ENCODE measurements at regions of chr9 and their contacts with region 1.

Region 1: GRCh38 chr9:89310475-89311346 is at the start of gene CKS2:
- DNase-seq: peak; percentile 100
- H3K4me3 ChIP-seq: peak within 1 kb of the TSS; percentile 70 to 98 (median 97)
- H3K27ac ChIP-seq: peak within 1 kb of the TSS; percentile 98
- H3K4me1 ChIP-seq: peaks cover 28% of the 10 kb centered on the region
- H3K27me3 ChIP-seq: no peaks in the 10 kb centered on the region
- CTCF ChIP-seq: no peak
- POLR2A ChIP-seq: peak; percentile 95
- total RNA-seq, gene CKS2: 149 and 153 TPM in 2 replicates

Region 2: DNA sequence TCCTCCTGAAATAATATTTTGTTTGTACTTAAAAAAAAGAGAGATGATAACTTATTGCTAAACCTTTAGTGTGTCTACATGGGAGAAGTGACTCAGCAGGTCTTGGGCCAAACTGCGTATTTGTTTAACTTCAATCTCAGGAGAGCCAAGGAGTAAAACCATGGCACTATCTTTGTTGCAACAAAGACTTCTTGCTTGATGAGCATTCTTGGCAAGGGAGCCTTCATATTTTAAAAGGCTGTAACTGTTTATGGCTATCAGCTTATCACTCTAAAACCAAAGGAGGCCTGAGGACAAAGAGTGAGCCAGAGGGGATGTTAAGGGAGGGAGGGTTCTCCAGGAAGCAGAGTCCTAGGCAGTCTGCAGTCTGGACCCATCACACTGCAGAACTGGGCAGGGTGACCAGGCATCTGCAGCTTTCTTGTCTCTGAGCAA is 535.7 kb before region 1 on chr9:
- CTCF ChIA-PET with region 1: no interaction called
- POLR2A ChIA-PET with region 1: no interaction called
- dilution Hi-C with region 1: no loop called
- intact Hi-C with region 1: loop called (anchors 1 kb)
- DNase-seq: peak; percentile 80
- H3K4me3 ChIP-seq: no peak overlapping the region
- H3K27ac ChIP-seq: peak overlapping the region; percentile 88
- H3K4me1 ChIP-seq: peaks cover 52% of the 10 kb centered on the region
- H3K27me3 ChIP-seq: no peaks in the 10 kb centered on the region
- CTCF ChIP-seq: no peak
- POLR2A ChIP-seq: no peak

Region 3: DNA sequence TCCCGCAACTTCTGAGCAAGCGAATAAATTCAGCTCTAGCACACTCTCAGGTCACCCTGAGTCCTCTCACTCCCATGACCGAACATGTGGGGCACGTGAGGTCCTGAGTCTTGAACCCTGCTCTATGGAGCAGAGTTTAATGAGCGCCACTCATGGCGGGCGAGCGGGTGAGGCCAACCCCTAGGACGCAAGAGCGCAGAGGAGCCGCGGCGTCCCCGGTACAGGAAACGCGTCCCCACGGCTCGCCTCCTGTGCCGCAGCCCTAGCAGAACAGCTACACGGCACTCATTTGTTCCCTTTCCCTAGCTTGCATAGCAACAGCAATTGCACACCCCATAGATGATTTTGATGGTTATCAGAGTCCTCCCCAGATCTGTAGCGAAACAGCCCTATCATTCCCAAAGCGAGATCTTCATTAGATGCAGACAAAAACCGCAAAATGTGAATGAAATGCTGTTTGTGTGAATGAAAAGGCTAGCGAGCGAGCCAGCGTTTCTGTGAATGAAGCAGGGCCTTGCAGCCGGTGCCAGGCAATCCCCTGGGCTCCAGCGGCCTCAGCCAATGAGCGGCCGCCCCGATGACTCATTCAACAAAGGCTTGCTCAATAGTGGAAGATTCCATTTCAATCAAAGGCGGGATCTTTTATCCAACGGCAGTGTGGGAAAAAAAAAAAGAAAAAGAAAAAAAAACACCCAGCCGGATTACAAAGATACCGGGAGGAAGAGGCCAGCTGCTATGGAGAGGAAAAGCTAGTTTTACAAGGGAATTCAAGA is 130.6 kb before region 1 on chr9:
- CTCF ChIA-PET with region 1: no interaction called
- POLR2A ChIA-PET with region 1: no interaction called
- dilution Hi-C with region 1: no loop called
- intact Hi-C with region 1: loop called (anchors 1 kb)
- DNase-seq: peak; percentile 97
- H3K4me3 ChIP-seq: peak overlapping the region; percentile 2 to 60 (median 34)
- H3K27ac ChIP-seq: peak overlapping the region; percentile 83
- H3K4me1 ChIP-seq: peaks cover 31% of the 10 kb centered on the region
- H3K27me3 ChIP-seq: peaks cover 13 to 20% of the 10 kb centered on the region in 2 experiments
- CTCF ChIP-seq: no peak
- POLR2A ChIP-seq: peak; percentile 85

Region 4: GRCh38 chr9:89225991-89226471 is 84.7 kb before region 1 on chr9:
- CTCF ChIA-PET with region 1: no interaction called
- POLR2A ChIA-PET with region 1: no interaction called
- dilution Hi-C with region 1: no loop called
- intact Hi-C with region 1: no loop called
- DNase-seq: no peak
- H3K4me3 ChIP-seq: no peak overlapping the region
- H3K27ac ChIP-seq: no peak overlapping the region
- H3K4me1 ChIP-seq: no peaks in the 10 kb centered on the region
- H3K27me3 ChIP-seq: peaks cover 0 to 4% of the 10 kb centered on the region in 2 experiments
- CTCF ChIP-seq: no peak
- POLR2A ChIP-seq: no peak

Region 5: GRCh38 chr9:89498852-89499480 is 188.3 kb after region 1 on chr9:
- CTCF ChIA-PET with region 1: no interaction called
- POLR2A ChIA-PET with region 1: no interaction called
- dilution Hi-C with region 1: no loop called
- intact Hi-C with region 1: no loop called
- DNase-seq: no peak
- H3K4me3 ChIP-seq: no peak overlapping the region
- H3K27ac ChIP-seq: no peak overlapping the region
- H3K4me1 ChIP-seq: peaks cover 4% of the 10 kb centered on the region
- H3K27me3 ChIP-seq: peaks cover 2 to 4% of the 10 kb centered on the region in 2 experiments
- CTCF ChIP-seq: no peak
- POLR2A ChIP-seq: no peak

Measured in endothelial cell of umbilical vein (primary cell).